ENCODE measurements at regions of chr11 and their contacts with region 1.

Region 1: DNA sequence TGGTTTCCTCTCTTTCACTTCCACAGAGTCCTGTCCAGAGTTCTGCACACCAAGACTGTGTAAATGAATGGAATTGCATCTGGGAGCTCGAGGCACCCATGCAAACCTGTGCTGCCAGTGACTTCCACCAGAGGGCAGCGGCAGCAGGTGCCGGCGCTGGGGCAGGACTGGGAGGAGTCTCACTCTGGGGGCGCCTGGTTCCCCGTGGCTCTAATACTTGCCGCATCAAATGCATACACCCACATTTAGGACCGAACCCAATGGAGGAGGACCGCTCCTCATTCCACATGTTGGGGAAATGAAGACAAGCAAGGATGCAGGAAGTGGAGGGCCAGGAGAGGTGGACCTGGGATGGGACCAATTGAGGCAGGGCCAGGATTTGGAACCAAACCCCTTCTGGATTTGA is 1.1 kb upstream of the CD6 start:
- DNase-seq: peak; percentile 68
- ATAC-seq: peak; percentile 91
- H3K4me3 Mint-ChIP-seq: no peak overlapping the region
- H3K27ac Mint-ChIP-seq: peak overlapping the region; percentile 32
- H3K4me1 Mint-ChIP-seq: peaks cover 31% of the 10 kb centered on the region
- H3K27me3 Mint-ChIP-seq: no peaks in the 10 kb centered on the region
- CTCF ChIP-seq: peak; percentile 88

Region 2: GRCh38 chr11:60899046-60899936 is 71.1 kb before region 1 on chr11:
- CTCF ChIA-PET with region 1: interaction called, 17 read pairs
- POLR2A ChIA-PET with region 1: no interaction called
- intact Hi-C with region 1: no loop called
- DNase-seq: no peak
- ATAC-seq: peak; percentile 90
- H3K4me3 Mint-ChIP-seq: no peak overlapping the region
- H3K27ac Mint-ChIP-seq: no peak overlapping the region
- H3K4me1 Mint-ChIP-seq: peaks cover 10% of the 10 kb centered on the region
- H3K27me3 Mint-ChIP-seq: no peaks in the 10 kb centered on the region
- CTCF ChIP-seq: peak; percentile 95

Region 3: GRCh38 chr11:60943085-60943484 is 27.3 kb before region 1 on chr11:
- CTCF ChIA-PET with region 1: no interaction called
- POLR2A ChIA-PET with region 1: no interaction called
- intact Hi-C with region 1: no loop called
- DNase-seq: no peak
- ATAC-seq: no peak
- H3K4me3 Mint-ChIP-seq: no peak overlapping the region
- H3K27ac Mint-ChIP-seq: peak overlapping the region; percentile 18
- H3K4me1 Mint-ChIP-seq: peaks cover 51% of the 10 kb centered on the region
- H3K27me3 Mint-ChIP-seq: no peaks in the 10 kb centered on the region
- CTCF ChIP-seq: no peak

Region 4: GRCh38 chr11:60985991-60986915 is 15.9 kb after region 1 on chr11:
- CTCF ChIA-PET with region 1: interaction called, 11 read pairs
- POLR2A ChIA-PET with region 1: no interaction called
- intact Hi-C with region 1: loop called (anchors 2 kb)
- DNase-seq: no peak
- ATAC-seq: peak; percentile 47
- H3K4me3 Mint-ChIP-seq: peak overlapping the region; percentile 24
- H3K27ac Mint-ChIP-seq: peak overlapping the region; percentile 79
- H3K4me1 Mint-ChIP-seq: peaks cover 53% of the 10 kb centered on the region
- H3K27me3 Mint-ChIP-seq: no peaks in the 10 kb centered on the region
- CTCF ChIP-seq: no peak

Region 5: GRCh38 chr11:61041755-61042518 is 71.6 kb after region 1 on chr11:
- CTCF ChIA-PET with region 1: interaction called, 7 read pairs
- POLR2A ChIA-PET with region 1: interaction called, 4 read pairs
- intact Hi-C with region 1: loop called (anchors 2 kb)
- DNase-seq: no peak
- ATAC-seq: peak; percentile 91
- H3K4me3 Mint-ChIP-seq: peak overlapping the region; percentile 75
- H3K27ac Mint-ChIP-seq: peak overlapping the region; percentile 78
- H3K4me1 Mint-ChIP-seq: peaks cover 32% of the 10 kb centered on the region
- H3K27me3 Mint-ChIP-seq: no peaks in the 10 kb centered on the region
- CTCF ChIP-seq: no peak

Region 6: DNA sequence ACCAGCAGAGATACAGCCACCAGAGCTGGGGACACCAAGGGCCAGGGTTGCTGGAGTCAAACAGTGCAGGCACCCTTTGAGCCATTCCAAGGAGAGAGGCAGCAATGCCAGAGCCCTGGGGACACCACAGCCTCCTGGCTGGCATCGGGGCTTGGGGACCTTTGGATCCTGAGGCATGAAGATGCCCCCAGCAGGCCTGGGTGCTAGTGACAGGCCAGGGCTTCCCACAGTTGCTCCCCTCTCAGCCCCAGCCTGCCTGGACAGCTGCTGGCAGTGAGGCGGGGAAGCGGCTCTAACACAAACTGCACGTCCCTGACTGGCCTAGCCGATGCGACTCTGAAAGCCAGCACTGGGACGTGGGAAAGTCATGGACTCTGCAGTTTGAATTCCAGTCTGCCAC is 134.6 kb after region 1 on chr11:
- CTCF ChIA-PET with region 1: no interaction called
- POLR2A ChIA-PET with region 1: no interaction called
- intact Hi-C with region 1: no loop called
- DNase-seq: no peak
- ATAC-seq: no peak
- H3K4me3 Mint-ChIP-seq: no peak overlapping the region
- H3K27ac Mint-ChIP-seq: no peak overlapping the region
- H3K4me1 Mint-ChIP-seq: peaks cover 10% of the 10 kb centered on the region
- H3K27me3 Mint-ChIP-seq: no peaks in the 10 kb centered on the region
- CTCF ChIP-seq: no peak

Region 7: GRCh38 chr11:61187505-61188130 is 217.2 kb after region 1 on chr11:
- CTCF ChIA-PET with region 1: interaction called, 9 read pairs
- POLR2A ChIA-PET with region 1: no interaction called
- intact Hi-C with region 1: loop called (anchors 1 kb)
- DNase-seq: peak; percentile 63
- ATAC-seq: peak; percentile 100
- H3K4me3 Mint-ChIP-seq: no peak overlapping the region
- H3K27ac Mint-ChIP-seq: no peak overlapping the region
- H3K4me1 Mint-ChIP-seq: peaks cover 4% of the 10 kb centered on the region
- H3K27me3 Mint-ChIP-seq: no peaks in the 10 kb centered on the region
- CTCF ChIP-seq: peak; percentile 98

Measured in activated B cell treated with CpG ODN at 0.5 μM for 24 hours (primary cell).